ENCODE measurements at regions of chr15 and their contacts with region 1.

Region 1: GRCh38 chr15:66946578-66947164 is 118.7 kb upstream of the SMAD3 start:
- DNase-seq: peak; percentile 79
- H3K4me3 ChIP-seq: no peak overlapping the region
- H3K27ac ChIP-seq: no peak overlapping the region
- H3K4me1 ChIP-seq: peaks cover 0 to 4% of the 10 kb centered on the region in 2 experiments; a peak in 1 of 4 replicates
- H3K27me3 ChIP-seq: no peaks in the 10 kb centered on the region
- CTCF ChIP-seq: peak; percentile 94
- EP300 ChIP-seq: no peak
- RAD21 ChIP-seq: peak; percentile 99

Region 2: DNA sequence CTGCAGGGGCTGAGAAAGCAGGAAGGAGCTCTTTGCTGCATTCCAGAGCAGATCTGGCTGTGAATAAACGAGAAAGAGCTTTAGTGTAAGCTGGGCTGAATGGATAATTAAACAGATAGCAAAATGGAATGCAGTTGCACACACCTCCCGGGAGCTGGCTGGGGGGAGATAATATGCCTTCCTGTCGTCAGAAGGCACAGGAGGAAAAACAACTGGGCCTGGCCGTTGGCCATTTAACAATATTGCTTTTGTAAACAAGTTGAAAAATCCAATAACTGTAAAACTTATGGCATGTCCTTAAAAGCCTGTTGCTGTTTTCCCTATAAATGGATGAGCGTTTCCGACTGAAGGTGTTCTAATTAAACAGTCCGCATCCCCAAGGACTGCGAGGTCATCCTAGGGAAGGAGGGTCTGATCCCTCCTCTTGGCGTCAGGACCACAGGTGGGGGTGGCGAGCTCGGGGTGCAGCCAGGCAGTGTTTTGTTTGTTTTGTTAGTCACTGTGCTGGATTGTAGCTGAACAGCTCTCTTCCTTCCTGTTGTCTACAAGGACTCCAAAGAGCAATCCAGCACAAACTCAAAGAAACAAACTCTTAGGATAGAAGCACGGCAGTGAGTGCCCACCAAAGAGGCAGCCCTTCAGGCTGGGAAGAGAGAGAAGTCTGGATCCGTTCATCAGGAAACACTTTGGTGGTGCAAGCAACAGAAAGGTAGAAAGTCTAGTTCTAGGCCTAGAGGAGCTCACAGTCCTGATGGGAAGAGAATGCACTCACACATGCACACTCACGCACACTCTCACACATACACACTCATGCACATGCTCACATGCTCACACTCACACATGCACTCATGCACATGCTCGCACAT is 14.7 kb before region 1 on chr15:
- CTCF ChIA-PET with region 1: interaction called, 44 read pairs
- POLR2A ChIA-PET with region 1: no interaction called
- DNase-seq: no peak
- H3K4me3 ChIP-seq: peak overlapping the region in 1 of 2 experiments; percentile 49; a peak in 2 of 4 replicates
- H3K27ac ChIP-seq: peak overlapping the region; percentile 63 to 64; a peak in 3 of 4 replicates
- H3K4me1 ChIP-seq: peaks cover 19% of the 10 kb centered on the region in 2 experiments; a peak in 3 of 4 replicates
- H3K27me3 ChIP-seq: no peaks in the 10 kb centered on the region
- CTCF ChIP-seq: no peak
- EP300 ChIP-seq: no peak
- RAD21 ChIP-seq: no peak

Region 3: DNA sequence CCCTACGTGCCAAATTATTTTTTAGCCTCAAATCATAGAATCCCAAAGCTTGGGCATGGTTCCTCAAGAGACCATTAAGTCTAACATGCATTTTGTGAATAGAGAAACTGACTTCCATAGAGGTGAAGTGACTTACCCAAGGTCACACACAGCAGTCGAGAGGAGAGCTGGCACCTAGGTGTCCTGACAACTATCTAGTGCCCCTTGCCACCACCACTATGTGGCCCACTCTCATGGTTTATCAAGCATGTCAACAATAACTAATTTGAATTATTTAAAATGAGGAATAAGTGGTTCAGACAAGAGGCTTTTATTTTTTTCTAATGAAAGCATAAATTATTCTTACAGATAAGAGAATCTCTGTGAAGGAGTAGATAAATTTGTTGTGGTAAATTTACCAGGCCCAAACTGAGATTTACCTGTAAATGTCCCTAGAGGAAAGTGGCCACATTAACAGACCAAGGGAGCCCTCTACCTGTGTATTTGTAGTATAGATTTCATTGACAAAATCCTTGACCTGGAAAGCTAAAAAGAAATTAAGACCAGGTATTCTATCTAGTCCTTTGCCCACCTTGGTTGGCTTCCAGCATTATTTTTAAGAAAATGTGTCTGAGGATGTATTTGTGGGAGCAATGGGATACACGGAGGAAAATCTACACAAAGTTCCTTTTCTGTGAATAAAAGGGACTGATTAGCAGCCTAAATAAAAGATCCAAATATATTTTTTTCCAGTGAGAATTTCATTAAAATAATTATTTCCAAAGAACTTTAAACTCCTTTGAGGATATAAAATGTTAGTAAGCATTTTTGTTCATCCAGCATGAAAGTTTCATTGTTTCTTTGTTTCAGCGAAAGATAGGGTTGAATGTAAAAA is 357.1 kb after region 1 on chr15:
- CTCF ChIA-PET with region 1: interaction called, 112 read pairs
- POLR2A ChIA-PET with region 1: no interaction called
- DNase-seq: peak; percentile 6
- H3K4me3 ChIP-seq: no peak overlapping the region
- H3K27ac ChIP-seq: no peak overlapping the region
- H3K4me1 ChIP-seq: peaks cover 3 to 13% of the 10 kb centered on the region in 2 experiments; a peak in 3 of 4 replicates
- H3K27me3 ChIP-seq: no peaks in the 10 kb centered on the region
- CTCF ChIP-seq: peak; percentile 64
- EP300 ChIP-seq: no peak
- RAD21 ChIP-seq: peak; percentile 88

Region 4: GRCh38 chr15:67456677-67457529 is 510.2 kb after region 1 on chr15:
- CTCF ChIA-PET with region 1: interaction called, 13 read pairs
- POLR2A ChIA-PET with region 1: no interaction called
- DNase-seq: peak; percentile 77
- H3K4me3 ChIP-seq: no peak overlapping the region; a peak in 1 of 4 replicates
- H3K27ac ChIP-seq: no peak overlapping the region
- H3K4me1 ChIP-seq: peaks cover 0 to 17% of the 10 kb centered on the region in 2 experiments; a peak in 2 of 4 replicates
- H3K27me3 ChIP-seq: no peaks in the 10 kb centered on the region
- CTCF ChIP-seq: peak; percentile 92
- EP300 ChIP-seq: no peak
- RAD21 ChIP-seq: peak; percentile 86

Region 5: DNA sequence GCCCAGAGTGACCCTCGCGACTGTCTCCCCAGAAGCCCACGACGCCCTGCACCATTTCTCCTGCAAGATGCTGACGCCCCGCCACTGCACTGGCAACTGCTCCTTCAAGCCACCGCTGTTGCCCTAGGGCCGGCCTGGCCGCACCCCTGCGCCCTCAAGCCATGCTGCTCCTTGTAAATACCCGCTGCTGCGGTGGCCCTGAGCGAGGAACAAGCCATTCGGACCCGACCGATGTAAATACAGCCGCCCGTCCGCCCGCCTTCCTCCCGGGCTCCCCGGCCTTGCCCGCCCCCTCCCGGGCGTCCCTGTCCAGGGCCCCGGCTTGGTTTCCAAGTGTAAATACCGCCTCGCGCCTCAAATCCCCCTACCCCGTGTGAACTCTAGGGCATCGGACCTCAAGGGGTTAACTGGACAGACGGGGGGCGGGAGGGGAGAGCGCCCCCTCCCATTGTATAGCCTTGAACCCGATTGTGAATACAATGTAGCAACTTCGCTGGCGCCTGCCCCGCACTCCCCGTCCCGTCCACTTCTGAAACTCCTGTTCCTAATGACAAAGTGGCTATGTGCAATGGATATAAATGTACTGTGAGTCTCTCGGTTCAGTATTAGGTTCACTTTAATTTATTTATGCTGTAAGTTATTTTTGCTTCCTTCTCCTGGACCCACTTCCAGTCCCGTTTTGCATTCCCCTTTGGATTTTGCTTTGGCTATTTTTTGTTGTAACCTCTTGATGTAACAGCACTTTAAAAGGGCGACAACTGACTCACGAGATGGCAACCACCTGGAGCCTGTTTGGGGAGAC is 887.2 kb after region 1 on chr15:
- CTCF ChIA-PET with region 1: interaction called, 11 read pairs
- POLR2A ChIA-PET with region 1: no interaction called
- DNase-seq: peak; percentile 92
- H3K4me3 ChIP-seq: peak overlapping the region; percentile 27 to 44
- H3K27ac ChIP-seq: no peak overlapping the region
- H3K4me1 ChIP-seq: peaks cover 0 to 14% of the 10 kb centered on the region in 2 experiments; a peak in 1 of 4 replicates
- H3K27me3 ChIP-seq: no peaks in the 10 kb centered on the region
- CTCF ChIP-seq: peak; percentile 61
- EP300 ChIP-seq: no peak
- RAD21 ChIP-seq: peak; percentile 71